Activated CD8-positive, alpha-beta memory T cell treated with anti-CD3 and anti-CD28 coated beads, Interleukin-2, amount 10 ng/mL, durations not matched to agents 7 days and 5 days (primary cell): ENCODE measurements at regions of chr7 and their contacts with region 1.

Region 1: GRCh38 chr7:47945261-47946001 is 2.8 kb downstream of the PKD1L1 start:
- DNase-seq: peak; percentile 82
- ATAC-seq: peak; percentile 83
- H3K4me3 Mint-ChIP-seq: no peak overlapping the region
- H3K27ac Mint-ChIP-seq: no peak overlapping the region
- H3K4me1 Mint-ChIP-seq: peaks cover 7% of the 10 kb centered on the region
- H3K27me3 Mint-ChIP-seq: no peaks in the 10 kb centered on the region

Region 2: GRCh38 chr7:47901542-47901941 is 43.9 kb before region 1 on chr7:
- CTCF ChIA-PET with region 1: no interaction called
- DNase-seq: no peak
- ATAC-seq: no peak
- H3K4me3 Mint-ChIP-seq: no peak overlapping the region
- H3K27ac Mint-ChIP-seq: no peak overlapping the region
- H3K4me1 Mint-ChIP-seq: no peaks in the 10 kb centered on the region
- H3K27me3 Mint-ChIP-seq: peaks cover 13% of the 10 kb centered on the region

Region 3: GRCh38 chr7:47968847-47969774 is 23.7 kb after region 1 on chr7:
- CTCF ChIA-PET with region 1: interaction called, 16 read pairs
- DNase-seq: peak; percentile 57
- ATAC-seq: peak; percentile 60
- H3K4me3 Mint-ChIP-seq: no peak overlapping the region
- H3K27ac Mint-ChIP-seq: peak overlapping the region; percentile 17
- H3K4me1 Mint-ChIP-seq: peaks cover 7% of the 10 kb centered on the region
- H3K27me3 Mint-ChIP-seq: no peaks in the 10 kb centered on the region

Region 4: GRCh38 chr7:48154792-48155413 is 209.5 kb after region 1 on chr7:
- CTCF ChIA-PET with region 1: interaction called, 44 read pairs
- DNase-seq: peak; percentile 67
- ATAC-seq: peak; percentile 78
- H3K4me3 Mint-ChIP-seq: no peak overlapping the region
- H3K27ac Mint-ChIP-seq: no peak overlapping the region
- H3K4me1 Mint-ChIP-seq: peaks cover 3% of the 10 kb centered on the region
- H3K27me3 Mint-ChIP-seq: peaks cover 38% of the 10 kb centered on the region